Activated CD4-positive, alpha-beta T cell treated with anti-CD3 and anti-CD28 coated beads, Interleukin-2, amount 10 ng/mL, durations not matched to agents 24 days and 14 days (primary cell): ENCODE measurements at regions of chr20 and their contacts with region 1.

Region 1: GRCh38 chr20:354298-355064 is 7.6 kb downstream of the NRSN2 start:
- DNase-seq: peak; percentile 95
- H3K4me3 Mint-ChIP-seq: no peak overlapping the region
- H3K27ac Mint-ChIP-seq: no peak overlapping the region
- H3K4me1 Mint-ChIP-seq: peaks cover 4% of the 10 kb centered on the region
- H3K27me3 Mint-ChIP-seq: no peaks in the 10 kb centered on the region

Region 2: DNA sequence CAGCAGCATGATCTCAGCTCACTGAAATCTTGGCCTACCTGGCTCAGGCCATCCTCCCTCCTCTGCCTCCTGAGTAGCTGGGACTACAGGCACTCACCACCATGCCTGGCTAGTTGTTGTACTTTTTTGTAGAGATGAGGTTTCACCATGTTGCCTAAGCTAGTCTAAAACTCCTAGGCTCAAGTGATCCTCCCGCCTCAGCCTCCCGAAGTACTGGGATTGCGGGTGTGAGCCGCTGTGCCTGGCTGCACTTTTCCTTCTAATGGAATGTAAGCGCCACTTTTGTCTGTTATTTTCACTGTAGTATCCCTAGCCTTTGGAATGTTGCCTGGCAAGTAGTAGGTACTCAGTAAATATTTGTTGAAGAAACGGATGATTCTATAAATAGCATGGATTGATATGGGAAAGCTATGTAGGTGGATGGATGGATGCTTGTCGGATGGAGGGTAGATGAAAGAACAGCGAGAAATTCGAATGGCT is 15.7 kb after region 1 on chr20:
- intact Hi-C with region 1: no loop called
- DNase-seq: no peak
- H3K4me3 Mint-ChIP-seq: no peak overlapping the region
- H3K27ac Mint-ChIP-seq: no peak overlapping the region
- H3K4me1 Mint-ChIP-seq: peaks cover 51% of the 10 kb centered on the region
- H3K27me3 Mint-ChIP-seq: no peaks in the 10 kb centered on the region

Region 3: GRCh38 chr20:381581-382290 is 27.3 kb after region 1 on chr20:
- intact Hi-C with region 1: loop called (anchors 2 kb)
- DNase-seq: peak; percentile 94
- H3K4me3 Mint-ChIP-seq: peak overlapping the region; percentile 85
- H3K27ac Mint-ChIP-seq: peak overlapping the region; percentile 85
- H3K4me1 Mint-ChIP-seq: peaks cover 30% of the 10 kb centered on the region
- H3K27me3 Mint-ChIP-seq: no peaks in the 10 kb centered on the region

Region 4: GRCh38 chr20:401682-402495 is 47.4 kb after region 1 on chr20:
- intact Hi-C with region 1: loop called (anchors 5 kb)
- DNase-seq: no peak
- H3K4me3 Mint-ChIP-seq: peak overlapping the region; percentile 45
- H3K27ac Mint-ChIP-seq: peak overlapping the region; percentile 28
- H3K4me1 Mint-ChIP-seq: peaks cover 30% of the 10 kb centered on the region
- H3K27me3 Mint-ChIP-seq: no peaks in the 10 kb centered on the region

Region 5: GRCh38 chr20:433300-433975 is 79.0 kb after region 1 on chr20:
- intact Hi-C with region 1: loop called (anchors 2 kb)
- DNase-seq: peak; percentile 87
- H3K4me3 Mint-ChIP-seq: peak overlapping the region; percentile 78
- H3K27ac Mint-ChIP-seq: peak overlapping the region; percentile 97
- H3K4me1 Mint-ChIP-seq: peaks cover 65% of the 10 kb centered on the region
- H3K27me3 Mint-ChIP-seq: no peaks in the 10 kb centered on the region

Region 6: DNA sequence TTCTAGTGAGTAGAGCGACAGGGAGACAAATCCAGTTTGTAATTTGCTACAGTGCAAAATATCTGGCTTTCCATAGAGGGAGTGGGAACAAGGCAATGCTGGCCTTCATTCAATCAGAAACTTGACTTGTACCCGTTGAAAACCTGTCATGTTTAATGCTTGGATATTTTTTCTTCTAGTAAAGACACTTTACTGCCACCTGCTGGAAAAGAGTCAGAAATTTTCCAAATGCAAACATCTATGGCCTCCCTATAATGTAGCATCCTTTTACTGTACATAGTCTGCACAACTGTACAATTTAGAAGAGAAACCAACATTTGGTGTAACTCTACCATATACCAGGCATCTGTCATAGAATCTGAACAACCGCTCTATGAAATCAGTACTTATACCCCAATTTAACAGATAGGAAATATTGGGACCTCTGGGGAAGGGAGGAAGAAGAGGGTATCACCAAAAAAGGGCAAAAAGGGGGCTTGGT is 124.5 kb after region 1 on chr20:
- intact Hi-C with region 1: loop called (anchors 1 kb)
- DNase-seq: peak; percentile 86
- H3K4me3 Mint-ChIP-seq: no peak overlapping the region
- H3K27ac Mint-ChIP-seq: peak overlapping the region; percentile 52
- H3K4me1 Mint-ChIP-seq: peaks cover 31% of the 10 kb centered on the region
- H3K27me3 Mint-ChIP-seq: no peaks in the 10 kb centered on the region

Region 7: GRCh38 chr20:645318-646106 is 291.0 kb after region 1 on chr20:
- intact Hi-C with region 1: loop called (anchors 2 kb)
- DNase-seq: peak; percentile 93
- H3K4me3 Mint-ChIP-seq: no peak overlapping the region
- H3K27ac Mint-ChIP-seq: no peak overlapping the region
- H3K4me1 Mint-ChIP-seq: peaks cover 11% of the 10 kb centered on the region
- H3K27me3 Mint-ChIP-seq: peaks cover 22% of the 10 kb centered on the region